HepG2 (cell line): ENCODE measurements at regions of chr1 and their contacts with region 1.

Region 1: DNA sequence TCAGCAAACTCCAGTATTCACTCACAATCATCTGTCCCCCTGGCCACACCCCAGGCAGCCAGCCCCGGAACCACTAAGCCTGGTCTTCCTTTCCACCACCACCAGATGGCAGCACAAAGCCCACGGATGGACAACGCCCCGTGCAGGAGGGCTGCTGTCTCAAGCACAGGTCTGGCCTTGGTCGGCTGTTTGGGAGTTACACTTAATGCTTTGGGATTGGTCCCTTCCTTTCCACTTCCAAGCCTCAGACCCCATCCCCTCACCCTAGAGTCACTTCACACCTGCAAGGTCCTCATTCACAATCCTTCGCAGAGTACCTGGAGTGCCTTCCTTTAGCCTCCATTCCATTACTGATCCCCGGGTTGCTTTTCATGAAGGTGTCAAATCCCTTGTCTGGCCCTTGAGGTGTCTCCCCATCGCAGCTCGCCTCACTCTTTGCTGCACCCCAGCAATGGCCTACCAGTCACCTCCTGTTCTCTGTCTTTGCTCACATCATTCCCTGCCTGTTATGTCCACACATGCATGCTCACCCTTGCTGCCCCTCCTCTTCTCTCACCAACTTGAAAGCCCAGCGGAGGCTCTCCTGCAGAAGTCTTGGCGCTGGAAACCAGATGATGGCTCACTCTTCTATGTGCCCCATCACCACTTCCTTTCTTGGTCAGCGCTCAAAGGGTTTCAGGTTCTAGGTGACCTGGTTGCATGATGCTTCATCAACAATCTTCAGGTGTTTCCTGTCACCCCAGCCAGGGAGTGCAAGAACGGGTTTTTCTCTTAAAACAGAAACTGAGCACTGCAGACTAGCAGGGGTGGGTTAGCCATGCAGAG is 24.9 kb upstream of the KCNA2 start:
- DNase-seq: peak; percentile 40
- ATAC-seq: peak; percentile 99
- H3K4me3 ChIP-seq: no peak overlapping the region
- H3K27ac ChIP-seq: no peak overlapping the region
- H3K4me1 ChIP-seq: no peaks in the 10 kb centered on the region
- H3K27me3 ChIP-seq: no peaks in the 10 kb centered on the region; a peak in 2 of 5 replicates
- CTCF ChIP-seq: peak; percentile 93
- EP300 ChIP-seq: no peak
- POLR2A ChIP-seq: no peak
- RAD21 ChIP-seq: peak; percentile 55; the same call in 1 of the 2 replicates

Region 2: GRCh38 chr1:110766025-110766647 is 135.1 kb after region 1 on chr1:
- CTCF ChIA-PET with region 1: interaction called, 18 read pairs
- POLR2A ChIA-PET with region 1: no interaction called
- in situ Hi-C with region 1: loop called (anchors 5 kb)
- intact Hi-C with region 1: loop called (anchors 1 kb)
- DNase-seq: peak; percentile 25
- ATAC-seq: peak; percentile 37; the same call in 2 of the 3 replicates
- H3K4me3 ChIP-seq: no peak overlapping the region
- H3K27ac ChIP-seq: no peak overlapping the region
- H3K4me1 ChIP-seq: no peaks in the 10 kb centered on the region
- H3K27me3 ChIP-seq: no peaks in the 10 kb centered on the region
- CTCF ChIP-seq: peak; percentile 62
- EP300 ChIP-seq: no peak
- POLR2A ChIP-seq: no peak
- RAD21 ChIP-seq: no peak